Activated T-helper 2 cell treated with anti-CD3 and anti-CD28 coated beads, Interferon-gamma antibody, Interleukin-2, Interleukin-4, amounts not matched to agents 10 μg/mL and 5 μg/mL and 100 μg/mL, durations not matched to agents 14 hours and 24 hours and 36 hours (primary cell): ENCODE measurements at regions of chr6 and their contacts with region 1.

Region 1: GRCh38 chr6:116279260-116280063 is at the start of gene TSPYL1:
- DNase-seq: peak; percentile 93
- H3K4me3 Mint-ChIP-seq: peak within 1 kb of the TSS; percentile 97
- H3K27ac Mint-ChIP-seq: peak within 1 kb of the TSS; percentile 97
- H3K4me1 Mint-ChIP-seq: peaks cover 51% of the 10 kb centered on the region
- H3K27me3 Mint-ChIP-seq: peaks cover 3% of the 10 kb centered on the region
- total RNA-seq, gene TSPYL1: 41.1 and 42.3 TPM in 2 replicates

Region 2: GRCh38 chr6:116217069-116217468 is 62.4 kb before region 1 on chr6:
- intact Hi-C with region 1: loop called (anchors 5 kb)
- DNase-seq: no peak
- H3K4me3 Mint-ChIP-seq: no peak overlapping the region
- H3K27ac Mint-ChIP-seq: no peak overlapping the region
- H3K4me1 Mint-ChIP-seq: no peaks in the 10 kb centered on the region
- H3K27me3 Mint-ChIP-seq: no peaks in the 10 kb centered on the region

Region 3: GRCh38 chr6:116253505-116254296 is 25.8 kb before region 1 on chr6 and contains the start of gene TSPYL4:
- intact Hi-C with region 1: loop called (anchors 1 kb)
- DNase-seq: peak; percentile 89
- H3K4me3 Mint-ChIP-seq: no peak within 1 kb of the TSS
- H3K27ac Mint-ChIP-seq: no peak within 1 kb of the TSS
- H3K4me1 Mint-ChIP-seq: peaks cover 34% of the 10 kb centered on the region
- H3K27me3 Mint-ChIP-seq: no peaks in the 10 kb centered on the region
- total RNA-seq, gene TSPYL4: 17.5 and 18.0 TPM in 2 replicates

Region 4: DNA sequence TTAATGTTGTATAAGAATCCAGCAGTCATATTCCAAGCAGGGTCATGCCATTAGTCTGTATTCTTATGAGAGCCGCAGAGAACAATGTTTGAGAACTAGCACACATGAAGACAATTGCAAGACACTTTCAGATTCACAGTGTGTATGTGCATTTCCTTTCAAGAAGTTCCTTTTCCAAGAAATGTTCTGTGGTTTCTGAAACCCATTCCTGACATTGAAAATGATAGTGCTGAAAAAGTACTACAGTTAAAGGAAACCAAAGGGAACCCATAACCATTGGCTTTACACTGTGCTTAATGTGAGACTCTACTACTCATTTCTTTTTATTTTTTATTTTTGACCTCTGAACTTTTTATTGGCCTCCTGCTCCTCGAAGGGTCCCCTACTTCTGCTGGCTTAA is 177.5 kb after region 1 on chr6:
- intact Hi-C with region 1: loop called (anchors 5 kb)
- DNase-seq: no peak
- H3K4me3 Mint-ChIP-seq: no peak overlapping the region
- H3K27ac Mint-ChIP-seq: no peak overlapping the region
- H3K4me1 Mint-ChIP-seq: peaks cover 38% of the 10 kb centered on the region
- H3K27me3 Mint-ChIP-seq: peaks cover 30% of the 10 kb centered on the region

Region 5: GRCh38 chr6:116648156-116648555 is 368.7 kb after region 1 on chr6:
- intact Hi-C with region 1: loop called (anchors 5 kb)
- DNase-seq: no peak
- H3K4me3 Mint-ChIP-seq: no peak overlapping the region
- H3K27ac Mint-ChIP-seq: no peak overlapping the region
- H3K4me1 Mint-ChIP-seq: peaks cover 8% of the 10 kb centered on the region
- H3K27me3 Mint-ChIP-seq: no peaks in the 10 kb centered on the region

Region 6: DNA sequence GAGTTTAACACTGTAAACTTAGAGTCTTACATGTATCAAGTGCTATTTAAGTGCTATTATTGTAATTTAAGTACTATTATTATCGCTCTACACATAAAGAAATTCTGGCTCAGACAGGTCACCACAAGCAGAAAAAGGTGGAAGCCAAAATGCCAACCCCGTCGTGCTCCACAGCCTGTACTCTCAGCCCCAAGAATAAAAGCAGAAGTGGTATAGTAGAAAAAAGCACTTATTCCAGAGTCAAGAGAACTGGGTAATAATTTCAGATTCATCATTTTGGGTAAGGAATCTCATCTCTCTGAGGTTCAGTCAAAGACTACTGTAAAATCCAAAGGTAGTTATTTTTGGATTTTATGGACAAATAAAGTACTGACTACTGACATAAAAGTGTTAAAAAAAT is 388.2 kb after region 1 on chr6:
- intact Hi-C with region 1: loop called (anchors 5 kb)
- DNase-seq: no peak
- H3K4me3 Mint-ChIP-seq: peak overlapping the region; percentile 99
- H3K27ac Mint-ChIP-seq: peak overlapping the region; percentile 95
- H3K4me1 Mint-ChIP-seq: peaks cover 34% of the 10 kb centered on the region
- H3K27me3 Mint-ChIP-seq: peaks cover 19% of the 10 kb centered on the region